ENCODE measurements at regions of chr10 and their contacts with region 1.

Region 1: DNA sequence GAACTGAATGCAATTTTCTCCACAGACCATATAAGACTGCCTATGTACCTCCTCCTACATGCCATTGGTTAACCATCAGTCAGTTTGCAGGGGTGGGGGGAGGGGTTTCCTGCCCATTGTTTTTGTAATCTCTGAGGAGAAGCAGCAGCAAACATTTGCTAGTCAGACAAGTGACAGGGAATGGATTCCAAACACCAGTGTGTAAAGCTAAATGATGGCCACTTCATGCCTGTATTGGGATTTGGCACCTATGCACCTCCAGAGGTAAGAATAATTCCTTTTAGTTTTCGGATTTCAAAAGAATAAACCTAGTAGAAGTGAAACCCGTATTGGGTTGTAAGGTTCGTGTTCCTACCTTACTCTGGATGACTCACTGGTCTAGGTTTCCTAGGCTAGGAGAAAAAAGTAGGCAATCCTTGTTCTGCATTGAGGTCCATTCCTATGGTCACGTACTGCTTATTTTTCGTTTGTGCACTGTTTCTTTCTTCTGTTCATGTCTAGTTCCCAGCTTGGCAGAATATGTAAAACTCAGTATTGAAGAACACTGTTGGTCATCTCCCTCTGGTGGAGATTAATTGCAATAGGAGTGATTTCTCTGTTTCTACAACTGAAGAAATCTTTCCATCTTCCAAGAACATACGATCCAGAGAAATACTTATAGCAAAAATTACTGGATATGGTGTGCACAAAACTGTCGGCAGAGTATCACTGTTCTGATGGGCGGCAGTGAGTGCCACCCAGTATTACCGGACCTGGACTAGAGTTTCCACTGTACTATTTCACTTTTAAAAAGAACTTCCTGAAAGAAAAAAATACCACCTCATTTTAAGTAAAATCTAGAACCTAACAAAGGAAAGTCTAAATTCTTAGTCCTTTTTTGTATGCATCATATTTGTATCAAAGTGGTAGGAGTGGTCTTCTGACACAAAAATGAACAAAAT is at the start of gene AKR1C3:
- DNase-seq: peak; percentile 83
- H3K4me3 ChIP-seq: peak within 1 kb of the TSS; percentile 52 to 87 (median 56)
- H3K27ac ChIP-seq: peak within 1 kb of the TSS; percentile 28
- H3K4me1 ChIP-seq: peaks cover 7% of the 10 kb centered on the region
- H3K27me3 ChIP-seq: no peaks in the 10 kb centered on the region
- CTCF ChIP-seq: peak; percentile 43 to 53
- POLR2A ChIP-seq: no peak
- total RNA-seq, gene AKR1C3: 4.8 and 32.2 TPM in 2 replicates

Region 2: DNA sequence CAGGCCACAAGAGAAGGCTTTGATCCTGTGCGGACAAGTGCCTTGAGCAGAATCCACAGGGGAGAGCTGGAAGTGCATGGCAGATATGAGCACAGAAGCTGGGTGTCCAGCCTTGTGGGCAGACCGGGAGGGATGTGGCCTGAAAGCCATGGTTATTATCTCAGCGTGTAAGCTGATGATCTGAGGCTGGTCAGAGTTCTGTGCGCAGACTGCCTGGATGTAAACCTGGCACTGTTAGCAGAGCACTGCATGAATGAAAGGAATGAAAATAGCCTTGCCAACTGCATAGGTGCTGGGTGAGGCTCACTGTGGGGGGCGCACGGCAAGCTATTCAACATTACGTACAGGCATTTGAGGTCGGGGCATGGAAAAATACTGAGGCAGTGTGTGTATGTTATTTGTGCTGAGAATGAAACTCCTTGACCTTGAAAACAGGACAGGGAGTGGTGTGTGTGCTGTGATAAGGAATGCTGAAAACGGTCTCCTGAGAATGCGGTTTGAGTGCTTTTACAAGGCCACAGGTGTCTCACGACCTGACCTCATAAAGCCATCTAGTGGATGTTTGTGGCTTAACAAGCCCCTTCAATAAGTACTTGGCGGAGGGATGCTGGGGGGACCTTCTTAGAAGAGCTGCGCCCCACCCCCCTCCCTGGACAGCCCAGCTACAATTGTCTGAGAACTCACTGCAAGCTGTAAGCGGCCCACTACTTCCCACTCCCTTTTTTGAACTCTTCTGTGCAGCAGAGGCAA is 112.6 kb before region 1 on chr10:
- CTCF ChIA-PET with region 1: no interaction called
- POLR2A ChIA-PET with region 1: no interaction called
- dilution Hi-C with region 1: no loop called
- intact Hi-C with region 1: loop called (anchors 1 kb)
- DNase-seq: peak; percentile 62
- H3K4me3 ChIP-seq: no peak overlapping the region
- H3K27ac ChIP-seq: no peak overlapping the region
- H3K4me1 ChIP-seq: peaks cover 3% of the 10 kb centered on the region
- H3K27me3 ChIP-seq: peaks cover 0 to 3% of the 10 kb centered on the region in 2 experiments
- CTCF ChIP-seq: peak; percentile 48 to 50
- POLR2A ChIP-seq: no peak

Region 3: DNA sequence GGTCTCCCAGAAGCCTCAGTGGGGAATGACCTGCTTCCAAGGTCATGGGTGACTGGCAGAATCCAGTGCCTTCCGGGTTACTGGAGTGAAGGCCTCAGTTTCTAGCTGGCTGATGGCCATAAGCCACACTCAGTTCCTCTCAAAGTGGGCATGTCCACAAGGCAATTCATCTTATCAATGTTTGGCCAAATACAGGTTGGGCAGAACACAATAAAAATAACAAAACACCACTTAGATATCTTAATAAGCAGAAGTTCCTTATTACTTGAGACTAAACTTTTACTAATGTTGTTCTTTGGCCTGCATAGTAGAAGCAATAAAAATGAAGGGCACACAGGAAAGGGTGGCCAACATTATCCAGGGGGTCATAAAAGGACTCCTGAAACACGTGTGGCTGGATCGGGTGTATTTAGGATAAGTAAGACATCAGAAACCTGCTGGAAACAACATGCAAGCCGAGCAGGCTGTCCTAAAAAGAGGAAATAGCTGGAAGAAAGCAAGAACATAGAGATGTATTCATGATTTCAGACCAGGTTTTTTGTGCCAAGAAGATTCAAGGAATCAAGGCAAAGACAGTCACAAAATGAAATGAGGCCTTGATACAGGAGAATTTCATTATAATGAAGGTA is 71.2 kb before region 1 on chr10:
- CTCF ChIA-PET with region 1: interaction called, 3 read pairs
- POLR2A ChIA-PET with region 1: no interaction called
- dilution Hi-C with region 1: no loop called
- intact Hi-C with region 1: loop called (anchors 5 kb)
- DNase-seq: no peak
- H3K4me3 ChIP-seq: no peak overlapping the region
- H3K27ac ChIP-seq: no peak overlapping the region
- H3K4me1 ChIP-seq: peaks cover 11% of the 10 kb centered on the region
- H3K27me3 ChIP-seq: no peaks in the 10 kb centered on the region
- CTCF ChIP-seq: no peak
- POLR2A ChIP-seq: no peak

Region 4: DNA sequence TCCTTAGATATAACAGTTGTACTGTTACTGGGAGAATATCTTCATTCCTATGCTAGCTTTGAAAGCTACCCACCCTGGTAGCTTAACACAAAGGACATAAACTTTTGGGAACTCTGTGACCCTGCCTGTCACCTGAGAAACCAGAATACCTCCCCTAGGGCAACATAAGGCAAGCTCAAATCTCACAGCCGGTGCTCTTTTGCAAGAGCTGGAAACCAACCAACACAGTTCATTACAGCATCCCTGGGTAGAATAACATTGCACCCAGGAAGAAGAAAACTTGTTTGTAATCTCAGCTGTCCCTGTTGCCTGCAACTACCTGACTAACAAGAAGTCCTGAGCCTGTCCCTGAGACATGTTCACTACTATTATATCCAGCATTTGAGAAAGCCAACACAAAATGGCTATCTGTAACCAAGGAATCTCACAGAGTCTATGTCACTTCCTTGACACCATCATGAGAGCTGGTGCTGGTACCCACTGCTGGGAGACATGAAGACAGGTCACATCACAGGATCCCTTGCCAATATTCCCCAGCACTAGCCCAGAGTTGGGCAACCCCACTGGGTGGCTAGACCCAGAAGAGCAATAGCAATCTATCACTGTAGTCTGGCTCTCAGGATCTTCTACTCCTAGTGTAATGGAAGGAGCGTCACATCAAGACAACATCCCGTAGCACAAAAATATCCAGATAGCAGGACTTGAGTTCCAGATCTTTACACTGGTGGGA is 30.9 kb after region 1 on chr10:
- CTCF ChIA-PET with region 1: no interaction called
- POLR2A ChIA-PET with region 1: no interaction called
- dilution Hi-C with region 1: no loop called
- intact Hi-C with region 1: no loop called
- DNase-seq: no peak
- H3K4me3 ChIP-seq: no peak overlapping the region
- H3K27ac ChIP-seq: no peak overlapping the region
- H3K4me1 ChIP-seq: no peaks in the 10 kb centered on the region
- H3K27me3 ChIP-seq: no peaks in the 10 kb centered on the region
- CTCF ChIP-seq: no peak
- POLR2A ChIP-seq: no peak

Region 5: DNA sequence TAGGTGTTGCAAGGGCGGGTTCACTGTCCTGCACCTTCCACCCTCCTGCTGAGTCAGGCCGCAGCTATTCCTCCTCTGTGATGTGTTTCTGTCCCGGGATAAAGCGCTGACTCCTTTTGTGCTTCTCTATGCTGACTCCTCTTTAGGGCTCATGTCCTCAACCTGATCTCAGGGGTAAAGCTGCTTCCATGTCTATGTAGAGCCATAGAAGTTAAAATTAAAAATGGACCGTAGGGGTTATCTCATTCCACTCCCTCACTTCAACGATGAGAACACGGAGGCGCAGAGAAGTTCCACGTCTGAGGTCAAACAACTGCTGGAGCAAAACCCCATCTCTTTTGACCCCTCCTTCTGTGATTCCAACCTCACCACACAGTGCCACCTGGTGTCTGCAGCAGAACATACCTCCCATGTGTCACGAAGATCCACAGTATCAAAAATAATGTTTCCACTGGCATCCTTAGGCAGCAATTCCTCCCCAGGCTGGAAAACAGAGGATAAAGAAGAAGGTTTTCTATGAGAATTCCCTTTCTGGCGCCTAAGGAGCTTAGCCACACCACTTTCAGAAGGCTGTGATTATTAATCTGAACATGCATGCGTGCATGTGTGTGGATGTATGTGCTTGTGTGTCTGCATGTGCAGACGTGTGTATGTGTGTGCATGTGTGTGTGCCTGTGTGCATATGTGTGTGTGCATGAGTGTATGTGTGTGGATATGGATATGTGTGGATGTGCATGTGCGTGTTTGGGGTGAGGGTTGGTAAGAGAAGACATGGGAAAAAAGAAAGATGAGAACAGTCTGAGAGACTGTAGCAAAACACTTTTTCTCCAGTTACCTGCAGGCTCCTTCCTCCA is 189.0 kb after region 1 on chr10:
- CTCF ChIA-PET with region 1: interaction called, 3 read pairs
- POLR2A ChIA-PET with region 1: no interaction called
- dilution Hi-C with region 1: no loop called
- intact Hi-C with region 1: loop called (anchors 5 kb)
- DNase-seq: peak; percentile 46
- H3K4me3 ChIP-seq: no peak overlapping the region
- H3K27ac ChIP-seq: peak overlapping the region; percentile 71
- H3K4me1 ChIP-seq: peaks cover 14% of the 10 kb centered on the region
- H3K27me3 ChIP-seq: no peaks in the 10 kb centered on the region
- CTCF ChIP-seq: peak; percentile 47 to 63
- POLR2A ChIP-seq: no peak

Region 6: DNA sequence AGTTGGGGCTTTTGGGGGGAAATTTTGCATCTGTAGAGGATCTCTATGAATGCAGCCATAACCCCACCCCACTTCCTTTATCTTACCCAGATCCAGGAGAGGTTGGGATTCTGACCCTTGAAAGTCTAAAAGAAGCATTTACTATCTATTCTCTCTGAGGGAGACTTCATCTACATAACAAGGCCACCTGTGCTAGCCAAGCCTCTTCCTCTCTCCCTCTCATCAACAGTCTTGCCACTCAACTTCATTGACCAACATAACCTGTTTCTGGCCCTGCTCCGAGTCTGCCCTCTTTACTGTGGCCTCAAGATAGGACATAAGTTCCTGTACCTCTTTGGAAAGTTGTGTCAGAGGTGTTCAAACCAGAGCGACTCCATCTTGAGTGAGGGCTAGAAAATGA is 290.7 kb after region 1 on chr10:
- CTCF ChIA-PET with region 1: interaction called, 9 read pairs
- POLR2A ChIA-PET with region 1: no interaction called
- dilution Hi-C with region 1: no loop called
- intact Hi-C with region 1: loop called (anchors 1 kb)
- DNase-seq: no peak
- H3K4me3 ChIP-seq: no peak overlapping the region
- H3K27ac ChIP-seq: no peak overlapping the region
- H3K4me1 ChIP-seq: no peaks in the 10 kb centered on the region
- H3K27me3 ChIP-seq: peaks cover 0 to 2% of the 10 kb centered on the region in 2 experiments
- CTCF ChIP-seq: no peak
- POLR2A ChIP-seq: no peak

Region 7: DNA sequence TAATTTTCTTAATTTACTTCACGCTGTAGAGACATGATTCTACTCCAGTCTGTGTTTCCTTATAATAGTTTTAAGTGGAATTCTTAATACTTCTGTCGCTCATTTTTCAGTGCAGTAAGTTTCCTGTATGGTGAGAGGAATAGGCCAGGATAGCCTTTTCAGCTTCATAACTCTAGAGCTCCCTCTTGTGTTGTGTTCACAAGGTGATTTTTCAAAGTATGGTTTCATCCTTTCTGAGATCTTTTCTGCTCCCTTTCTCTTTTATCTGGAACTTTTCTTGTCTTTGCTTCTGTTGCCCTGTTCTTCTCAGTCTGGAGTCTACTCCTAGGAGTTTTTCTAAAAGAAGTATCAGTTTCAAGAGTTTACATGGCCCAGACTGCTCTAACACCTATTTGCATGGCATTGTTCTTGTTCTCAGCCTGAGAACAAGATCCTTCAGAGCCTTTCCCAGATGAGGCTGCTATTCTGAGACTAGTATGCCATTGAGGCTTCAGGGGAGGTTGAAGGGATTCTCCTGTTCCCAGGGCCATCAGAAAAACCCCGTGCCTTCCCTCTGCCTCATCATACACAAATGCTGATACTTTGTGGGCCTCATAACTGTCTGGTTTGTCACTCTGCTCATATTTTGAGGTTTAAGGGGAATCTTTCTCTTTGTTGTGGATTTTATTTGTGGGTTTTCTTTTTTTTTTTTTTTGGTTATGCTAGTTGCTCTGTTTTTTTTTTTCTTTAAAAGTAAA is 339.6 kb after region 1 on chr10:
- CTCF ChIA-PET with region 1: interaction called, 6 read pairs
- POLR2A ChIA-PET with region 1: no interaction called
- dilution Hi-C with region 1: no loop called
- intact Hi-C with region 1: loop called (anchors 2 kb)
- DNase-seq: peak; percentile 67
- H3K4me3 ChIP-seq: no peak overlapping the region
- H3K27ac ChIP-seq: no peak overlapping the region
- H3K4me1 ChIP-seq: no peaks in the 10 kb centered on the region
- H3K27me3 ChIP-seq: no peaks in the 10 kb centered on the region
- CTCF ChIP-seq: peak; percentile 42 to 50
- POLR2A ChIP-seq: no peak

Measured in endothelial cell of umbilical vein (primary cell).